ENCODE measurements at regions of chr14 and their contacts with region 1.

Region 1: GRCh38 chr14:23320774-23321571 is at the start of gene PABPN1:
- DNase-seq: peak; percentile 99
- H3K27ac ChIP-seq: peak within 1 kb of the TSS; percentile 87
- CTCF ChIP-seq: no peak

Region 2: DNA sequence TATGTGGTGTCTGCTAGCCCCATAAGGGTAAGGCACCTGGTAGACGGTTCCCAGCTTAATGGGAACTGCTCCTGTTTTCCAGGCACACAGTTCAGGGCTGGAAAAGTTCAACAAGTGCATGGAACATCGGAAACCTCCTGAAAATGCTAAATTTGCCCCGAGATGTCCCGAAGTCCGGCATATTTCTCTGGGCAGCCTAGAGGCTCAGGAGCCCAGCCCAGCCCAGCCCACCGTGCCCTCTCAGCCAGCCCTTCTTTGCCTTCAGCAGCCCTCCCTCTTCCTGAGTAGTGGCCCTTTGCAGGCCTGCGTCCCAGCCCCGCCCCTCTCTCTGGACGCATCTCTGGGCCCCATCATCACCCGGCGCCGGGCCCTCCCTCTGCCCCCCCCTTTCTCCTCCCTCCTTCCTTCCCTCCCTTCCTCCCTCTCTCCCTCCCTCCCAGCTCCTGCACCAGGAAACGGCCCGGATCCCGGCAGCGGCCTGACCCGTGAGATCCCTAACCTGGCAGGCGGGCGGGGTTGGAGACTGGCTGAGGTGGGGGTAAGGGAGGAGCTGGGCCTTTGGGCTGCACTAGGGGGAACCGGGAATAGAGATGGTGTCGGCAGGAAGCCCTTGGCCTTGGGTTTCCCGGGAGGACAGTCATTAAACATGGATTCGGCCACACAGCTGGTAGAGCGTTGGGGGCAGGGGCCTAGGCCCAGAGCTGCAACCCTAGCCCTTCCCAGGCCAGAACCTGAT is 14.4 kb before region 1 on chr14 and contains the start of gene BCL2L2:
- CTCF ChIA-PET with region 1: interaction called, 10 read pairs
- POLR2A ChIA-PET with region 1: interaction called, 12 read pairs
- DNase-seq: peak; percentile 72
- H3K27ac ChIP-seq: peak within 1 kb of the TSS; percentile 85
- CTCF ChIP-seq: no peak